ENCODE measurements at regions of chr15 and their contacts with region 1.

Region 1: GRCh38 chr15:41811432-41812195 is 16.3 kb upstream of the JMJD7 start:
- DNase-seq: peak; percentile 80
- H3K4me3 ChIP-seq: no peak overlapping the region
- H3K27ac ChIP-seq: no peak overlapping the region
- H3K4me1 ChIP-seq: no peaks in the 10 kb centered on the region
- H3K27me3 ChIP-seq: no peaks in the 10 kb centered on the region
- CTCF ChIP-seq: peak; percentile 70 to 93 (median 88)
- POLR2A ChIP-seq: no peak

Region 2: GRCh38 chr15:41603941-41604911 is 207.4 kb before region 1 on chr15:
- intact Hi-C with region 1: loop called (anchors 5 kb)
- DNase-seq: peak; percentile 52
- H3K4me3 ChIP-seq: no peak overlapping the region
- H3K27ac ChIP-seq: no peak overlapping the region
- H3K4me1 ChIP-seq: no peaks in the 10 kb centered on the region
- H3K27me3 ChIP-seq: no peaks in the 10 kb centered on the region
- CTCF ChIP-seq: peak; percentile 45 to 77 (median 59)
- POLR2A ChIP-seq: no peak

Measured in prostate gland (tissue), 2 donors.